ENCODE measurements at regions of chr21 and their contacts with region 1.

Region 1: GRCh38 chr21:40179166-40179565 is 311.9 kb downstream of the PCP4 start:
- DNase-seq: no peak
- H3K4me3 ChIP-seq: no peak overlapping the region
- H3K27ac ChIP-seq: no peak overlapping the region
- H3K4me1 ChIP-seq: no peaks in the 10 kb centered on the region
- H3K27me3 ChIP-seq: no peaks in the 10 kb centered on the region
- CTCF ChIP-seq: no peak
- POLR2A ChIP-seq: no peak

Region 2: GRCh38 chr21:40194185-40194980 is 15.2 kb after region 1 on chr21:
- CTCF ChIA-PET with region 1: no interaction called
- POLR2A ChIA-PET with region 1: no interaction called
- dilution Hi-C with region 1: no loop called
- intact Hi-C with region 1: no loop called
- DNase-seq: no peak
- H3K4me3 ChIP-seq: no peak overlapping the region
- H3K27ac ChIP-seq: no peak overlapping the region
- H3K4me1 ChIP-seq: no peaks in the 10 kb centered on the region
- H3K27me3 ChIP-seq: no peaks in the 10 kb centered on the region
- CTCF ChIP-seq: no peak
- POLR2A ChIP-seq: no peak

Region 3: GRCh38 chr21:40356649-40357048 is 177.5 kb after region 1 on chr21:
- CTCF ChIA-PET with region 1: no interaction called
- POLR2A ChIA-PET with region 1: interaction called, 10 read pairs
- dilution Hi-C with region 1: no loop called
- intact Hi-C with region 1: no loop called
- DNase-seq: no peak
- H3K4me3 ChIP-seq: no peak overlapping the region
- H3K27ac ChIP-seq: no peak overlapping the region
- H3K4me1 ChIP-seq: no peaks in the 10 kb centered on the region
- H3K27me3 ChIP-seq: no peaks in the 10 kb centered on the region
- CTCF ChIP-seq: no peak
- POLR2A ChIP-seq: no peak

Measured in endothelial cell of umbilical vein (primary cell).